ENCODE measurements at regions of chrX and their contacts with region 1.

Region 1: DNA sequence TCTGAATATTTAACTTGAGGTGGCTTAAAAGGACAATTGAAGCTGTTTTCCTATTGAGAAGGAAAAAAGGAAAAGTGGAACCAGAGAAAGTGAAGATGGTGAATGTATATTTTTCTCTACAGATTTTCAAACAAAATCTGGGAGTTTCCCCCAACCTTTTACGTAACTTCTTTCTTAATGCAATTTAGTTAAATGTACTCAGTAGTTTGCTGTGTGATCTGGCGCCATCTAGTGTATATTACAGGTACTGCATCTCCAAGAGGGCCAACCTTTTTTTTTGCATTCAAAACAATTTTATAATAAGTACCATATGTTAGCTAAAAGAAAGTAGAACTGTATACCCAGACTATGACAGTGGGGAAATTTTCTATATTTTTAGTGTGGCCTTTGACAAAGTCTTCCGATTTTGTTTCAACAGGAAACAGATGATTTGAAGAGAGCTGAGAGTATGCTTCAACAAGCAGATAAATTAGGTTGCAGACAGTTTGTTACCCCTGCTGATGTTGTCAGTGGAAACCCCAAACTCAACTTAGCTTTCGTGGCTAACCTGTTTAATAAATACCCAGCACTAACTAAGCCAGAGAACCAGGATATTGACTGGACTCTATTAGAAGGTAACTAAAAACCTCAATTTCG is 82.0 kb downstream of the PLS3 start:
- DNase-seq: no peak
- H3K4me3 ChIP-seq: no peak overlapping the region
- H3K27ac ChIP-seq: peak overlapping the region in 1 of 2 donors; percentile 35
- H3K4me1 ChIP-seq: peaks cover 0 to 6% of the 10 kb centered on the region in 2 donors
- H3K27me3 ChIP-seq: no peaks in the 10 kb centered on the region
- CTCF ChIP-seq: peak; percentile 84 to 98 (median 98)

Region 2: GRCh38 chrX:115539841-115540240 is 103.2 kb before region 1 on chrX:
- intact Hi-C with region 1: no loop called
- DNase-seq: no peak
- H3K4me3 ChIP-seq: no peak overlapping the region
- H3K27ac ChIP-seq: no peak overlapping the region
- H3K4me1 ChIP-seq: no peaks in the 10 kb centered on the region
- H3K27me3 ChIP-seq: no peaks in the 10 kb centered on the region
- CTCF ChIP-seq: no peak

Region 3: DNA sequence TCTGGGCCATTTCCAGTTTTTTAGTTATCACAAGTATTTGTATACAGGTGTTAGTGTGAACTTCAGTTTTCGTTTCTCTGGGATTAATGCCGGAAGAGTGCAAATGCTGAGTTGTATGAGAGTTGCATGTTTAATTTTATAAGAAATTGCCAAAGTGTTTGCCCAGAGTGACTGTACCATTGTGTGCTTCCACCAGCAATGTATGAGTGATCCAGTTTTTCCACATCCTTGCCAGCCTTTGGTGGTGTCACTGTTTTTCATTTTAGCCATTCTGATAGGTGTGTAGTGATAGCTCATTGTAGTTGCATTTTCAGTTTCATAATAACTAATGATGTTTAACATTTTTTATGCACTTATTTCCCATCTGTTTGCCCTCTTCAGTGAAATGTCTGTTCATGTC is 63.7 kb before region 1 on chrX:
- intact Hi-C with region 1: loop called (anchors 5 kb)
- DNase-seq: no peak
- H3K4me3 ChIP-seq: no peak overlapping the region
- H3K27ac ChIP-seq: peak overlapping the region; percentile 41 to 81
- H3K4me1 ChIP-seq: no peaks in the 10 kb centered on the region
- H3K27me3 ChIP-seq: no peaks in the 10 kb centered on the region
- CTCF ChIP-seq: no peak